ENCODE measurements at regions of chr19 and their contacts with region 1.

Region 1: DNA sequence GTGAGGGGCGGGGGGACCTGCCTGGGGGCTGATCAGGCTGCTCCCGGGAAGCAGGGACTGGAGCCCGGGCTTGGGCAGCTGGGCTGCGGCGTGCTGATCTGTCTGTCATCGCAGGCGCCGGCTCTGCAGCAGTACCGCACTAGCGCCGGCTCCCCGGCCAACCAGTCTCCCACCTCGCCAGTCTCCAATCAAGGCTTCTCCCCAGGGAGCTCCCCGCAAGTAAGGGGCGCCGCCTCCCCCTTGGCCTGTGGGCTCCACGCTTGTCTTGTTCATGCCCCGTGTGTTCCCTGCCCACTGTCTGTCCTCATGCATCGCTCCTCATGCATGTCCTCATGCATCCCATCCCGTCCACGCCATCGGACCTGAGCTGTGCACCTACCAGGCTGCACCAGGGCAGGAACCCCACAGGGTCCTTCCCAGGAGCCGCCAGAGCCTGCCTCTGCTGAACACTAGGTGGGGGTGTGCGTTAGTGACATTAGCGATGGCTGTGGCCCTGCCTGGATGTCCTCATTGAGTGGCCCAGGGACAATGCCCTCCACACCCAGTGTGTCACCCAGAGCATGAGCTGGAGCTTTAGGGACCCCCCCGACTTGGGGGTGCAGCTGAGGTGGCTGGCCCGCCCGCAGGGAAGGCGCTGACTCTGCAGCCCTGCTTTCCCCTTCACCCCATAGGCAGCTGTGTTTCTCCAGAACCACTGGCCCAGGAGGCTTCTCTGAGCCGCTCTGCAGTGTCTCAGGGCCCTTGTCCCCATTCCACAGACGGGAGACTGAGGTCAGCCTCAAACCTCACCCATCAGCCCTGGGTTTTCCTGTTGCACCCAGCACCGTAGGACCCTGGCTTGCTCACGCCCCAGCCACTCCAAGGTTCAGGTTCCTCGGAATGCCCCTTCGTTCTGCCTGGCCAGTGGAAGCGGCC is 19.5 kb downstream of the COMP start:
- DNase-seq: no peak
- H3K4me3 ChIP-seq: no peak overlapping the region
- H3K27ac ChIP-seq: no peak overlapping the region
- H3K4me1 ChIP-seq: peaks cover 0 to 6% (median 2%) of the 10 kb centered on the region in 4 experiments; a peak in 2 of 7 replicates
- H3K27me3 ChIP-seq: peaks cover 7 to 68% (median 52%) of the 10 kb centered on the region in 4 experiments
- CTCF ChIP-seq: peak; percentile 58 to 74 (median 68)
- EP300 ChIP-seq: no peak
- POLR2A ChIP-seq: no peak
- RAD21 ChIP-seq: peak; percentile 55 to 73; a peak in 3 of 4 replicates

Region 2: DNA sequence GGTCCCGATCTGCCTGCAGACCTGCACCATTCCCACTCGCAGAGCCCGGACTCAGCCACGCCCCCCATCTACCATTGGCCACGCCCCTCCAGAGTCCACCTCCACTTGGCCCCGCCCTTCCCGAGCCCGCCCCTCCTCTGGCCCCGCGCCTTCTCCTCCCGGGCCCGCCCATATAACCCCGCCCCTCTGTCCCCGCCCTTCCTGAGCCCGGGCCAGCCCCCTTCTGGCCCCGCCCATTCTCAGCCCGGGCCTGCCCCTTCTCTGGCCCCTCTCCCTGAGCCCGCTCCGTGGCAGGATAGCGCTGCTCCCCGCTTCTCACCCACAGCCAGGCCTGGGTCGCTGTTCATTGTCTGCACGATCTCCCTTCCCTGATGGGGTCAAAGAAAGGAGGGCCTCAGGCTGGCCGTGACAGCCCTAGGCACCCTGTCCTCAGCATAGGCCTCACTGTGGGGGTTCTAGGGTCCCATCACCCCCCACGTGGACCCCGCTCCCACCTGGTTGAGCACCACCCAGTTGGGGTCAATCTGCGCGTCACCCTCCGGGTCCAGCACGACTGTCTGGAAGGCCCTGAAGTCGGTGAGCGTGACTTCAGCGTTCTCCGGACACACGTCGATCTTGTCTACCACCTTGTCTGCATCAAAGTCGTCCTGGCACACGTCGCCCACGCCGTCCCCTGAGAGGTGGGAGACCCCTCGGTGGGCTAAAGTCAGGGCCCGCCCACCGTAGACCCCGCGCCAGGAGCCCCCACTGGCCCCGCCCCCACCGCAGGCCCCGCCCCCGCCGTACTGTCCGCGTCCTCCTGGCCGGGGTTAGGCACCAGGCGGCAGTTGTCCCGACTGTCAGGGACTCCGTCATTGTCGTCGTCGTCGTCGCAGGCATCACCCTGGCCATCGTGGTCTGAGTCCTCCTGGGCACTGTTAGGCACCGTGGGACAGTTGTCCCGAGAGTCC is 13.9 kb after region 1 on chr19:
- CTCF ChIA-PET with region 1: interaction called, 15 read pairs
- POLR2A ChIA-PET with region 1: interaction called, 5 read pairs
- DNase-seq: peak in 1 of 2 experiments; percentile 98
- H3K4me3 ChIP-seq: peak overlapping the region in 3 of 4 experiments; percentile 26 to 52 (median 32); a peak in 6 of 8 replicates
- H3K27ac ChIP-seq: no peak overlapping the region
- H3K4me1 ChIP-seq: peaks cover 3 to 31% (median 19%) of the 10 kb centered on the region in 4 experiments
- H3K27me3 ChIP-seq: peaks cover 61 to 97% (median 93%) of the 10 kb centered on the region in 4 experiments
- CTCF ChIP-seq: no peak
- EP300 ChIP-seq: no peak
- POLR2A ChIP-seq: no peak
- RAD21 ChIP-seq: no peak

Region 3: DNA sequence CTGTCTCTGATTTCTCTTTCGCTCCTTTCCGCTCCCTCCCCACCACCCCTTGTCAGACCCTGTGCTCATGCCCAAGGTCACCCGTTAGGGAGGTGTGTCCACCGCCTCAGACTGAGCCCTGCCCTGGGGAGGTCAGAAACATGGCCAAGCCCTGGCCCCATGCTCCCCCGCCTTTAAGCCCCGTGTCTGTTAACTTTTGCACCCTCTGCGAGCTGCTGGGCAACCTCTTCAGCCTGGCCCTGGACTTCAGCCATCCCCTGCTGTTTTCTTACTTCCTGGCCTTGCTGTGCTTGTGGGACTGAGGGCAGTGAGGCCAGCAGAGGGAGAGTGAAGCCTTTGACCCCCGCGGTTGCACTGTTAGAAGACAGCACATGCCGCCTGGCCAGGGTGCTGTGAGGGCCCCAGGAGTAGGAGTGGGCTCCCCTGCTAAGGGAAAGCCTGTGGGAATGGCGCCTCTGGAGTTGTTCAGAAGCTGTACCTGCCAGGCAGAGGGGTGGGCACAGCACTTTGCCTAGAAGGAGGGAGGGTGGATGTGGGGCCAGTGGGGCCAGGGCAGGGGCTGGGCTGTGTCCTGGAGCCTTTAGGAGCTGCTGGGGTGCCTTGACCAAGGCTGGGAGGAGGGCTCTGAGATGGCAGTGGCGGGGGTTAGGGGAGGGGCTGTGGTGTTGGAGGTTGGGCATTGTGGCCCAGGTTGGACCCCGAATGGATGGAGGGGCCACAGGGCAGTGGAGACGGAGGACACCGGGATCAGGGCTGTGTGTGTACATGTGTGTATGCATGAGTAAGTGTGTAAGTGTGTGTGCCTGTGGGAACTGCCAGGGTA is 68.1 kb after region 1 on chr19:
- CTCF ChIA-PET with region 1: interaction called, 132 read pairs
- POLR2A ChIA-PET with region 1: interaction called, 3 read pairs
- DNase-seq: no peak
- H3K4me3 ChIP-seq: no peak overlapping the region
- H3K27ac ChIP-seq: no peak overlapping the region
- H3K4me1 ChIP-seq: peaks cover 0 to 14% (median 10%) of the 10 kb centered on the region in 4 experiments; a peak in 6 of 7 replicates
- H3K27me3 ChIP-seq: no peaks in the 10 kb centered on the region
- CTCF ChIP-seq: no peak; a peak in 1 of 4 replicates
- EP300 ChIP-seq: no peak
- POLR2A ChIP-seq: no peak
- RAD21 ChIP-seq: no peak

Region 4: GRCh38 chr19:18856385-18857126 is 85.0 kb after region 1 on chr19:
- CTCF ChIA-PET with region 1: interaction called, 132 read pairs
- POLR2A ChIA-PET with region 1: no interaction called
- DNase-seq: no peak
- H3K4me3 ChIP-seq: no peak overlapping the region
- H3K27ac ChIP-seq: no peak overlapping the region
- H3K4me1 ChIP-seq: no peaks in the 10 kb centered on the region
- H3K27me3 ChIP-seq: no peaks in the 10 kb centered on the region
- CTCF ChIP-seq: peak; percentile 41 to 63 (median 58); a peak in 3 of 4 replicates
- EP300 ChIP-seq: no peak
- POLR2A ChIP-seq: no peak
- RAD21 ChIP-seq: peak; percentile 40 to 51

Measured in H1 (cell line).